ENCODE measurements at regions of chr1 and their contacts with region 1.

Region 1: DNA sequence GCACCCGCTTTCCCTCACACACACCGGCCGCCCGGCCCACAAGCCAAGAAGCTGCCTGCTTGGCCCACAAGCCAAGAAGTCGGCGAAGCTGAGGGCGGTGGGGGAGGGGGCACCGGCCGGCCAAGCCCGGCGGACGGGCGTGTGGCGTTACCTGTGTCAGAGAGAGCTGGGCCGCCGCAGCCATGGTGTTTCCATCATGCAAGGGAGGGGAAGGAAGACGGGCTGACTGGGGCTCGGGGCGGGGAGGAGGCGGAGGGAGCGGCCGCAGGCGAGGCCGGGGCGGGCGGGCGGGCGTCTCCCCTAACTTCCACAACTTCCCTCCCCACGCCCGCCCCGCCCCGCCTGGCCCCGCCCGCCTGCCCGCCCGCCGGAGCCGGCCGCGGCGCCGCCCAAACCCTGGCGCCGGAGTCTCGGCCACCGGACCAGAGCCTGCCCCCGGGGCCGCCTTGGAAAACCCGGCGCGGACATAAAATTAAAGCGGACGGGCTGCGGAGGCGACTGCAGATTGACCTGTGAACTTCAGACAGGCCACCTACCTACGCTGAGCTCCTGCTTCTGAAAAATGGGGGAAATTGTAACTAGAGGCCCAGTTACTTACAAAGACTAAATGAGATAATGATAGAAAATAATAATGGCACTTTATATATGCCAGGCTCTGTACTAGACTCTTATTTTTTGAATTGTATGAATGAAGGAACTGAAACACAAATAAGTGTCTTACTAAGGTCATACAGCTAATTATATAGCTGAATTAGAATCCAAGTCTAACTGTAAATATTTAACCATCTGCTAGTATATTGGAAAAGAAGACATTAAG is at the start of gene EPS15:
- DNase-seq: peak; percentile 95
- ATAC-seq: peak; percentile 76
- H3K4me3 Mint-ChIP-seq: peak within 1 kb of the TSS; percentile 100
- H3K27ac Mint-ChIP-seq: peak within 1 kb of the TSS; percentile 93
- H3K4me1 Mint-ChIP-seq: peaks cover 48% of the 10 kb centered on the region
- H3K27me3 Mint-ChIP-seq: no peaks in the 10 kb centered on the region
- total RNA-seq, gene EPS15: 59.6 to 61.6 TPM

Region 2: DNA sequence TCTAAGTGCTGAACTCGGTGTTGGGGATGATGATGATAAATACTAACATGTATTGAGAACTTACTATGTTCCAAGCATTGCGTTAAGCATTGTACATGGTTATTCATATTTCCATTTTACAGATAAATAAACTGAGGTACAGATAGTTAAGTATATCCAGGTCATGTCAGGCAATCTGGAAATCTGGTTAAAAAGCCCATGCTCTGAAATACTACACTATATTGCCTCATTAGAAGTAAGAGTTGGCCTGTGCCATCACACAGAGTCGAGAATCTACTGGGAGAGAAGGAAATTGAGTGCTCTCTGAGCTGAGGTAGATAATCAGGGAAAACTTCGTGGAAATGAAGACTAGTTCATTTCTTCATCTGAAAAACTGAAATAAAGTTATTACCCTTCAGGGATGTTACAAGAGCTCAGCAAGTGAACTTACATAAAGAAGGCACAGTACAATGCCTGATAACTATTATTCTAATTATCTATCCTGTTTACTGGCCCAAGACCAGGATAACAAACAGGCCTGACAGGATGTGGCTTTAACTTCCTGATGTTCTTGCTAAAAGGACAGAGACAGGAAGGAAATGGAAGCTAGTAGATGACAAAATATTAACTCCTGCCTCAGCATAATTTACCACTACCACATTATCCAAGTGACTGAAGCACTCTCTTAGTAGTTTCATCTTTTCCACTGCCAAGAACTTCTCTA is 85.8 kb before region 1 on chr1:
- CTCF ChIA-PET with region 1: no interaction called
- POLR2A ChIA-PET with region 1: interaction called, 7 read pairs
- intact Hi-C with region 1: loop called in 1 of 2 experiments (anchors 5 kb)
- DNase-seq: no peak
- ATAC-seq: no peak
- H3K4me3 Mint-ChIP-seq: no peak overlapping the region
- H3K27ac Mint-ChIP-seq: peak overlapping the region; percentile 45
- H3K4me1 Mint-ChIP-seq: peaks cover 24% of the 10 kb centered on the region
- H3K27me3 Mint-ChIP-seq: no peaks in the 10 kb centered on the region

Region 3: DNA sequence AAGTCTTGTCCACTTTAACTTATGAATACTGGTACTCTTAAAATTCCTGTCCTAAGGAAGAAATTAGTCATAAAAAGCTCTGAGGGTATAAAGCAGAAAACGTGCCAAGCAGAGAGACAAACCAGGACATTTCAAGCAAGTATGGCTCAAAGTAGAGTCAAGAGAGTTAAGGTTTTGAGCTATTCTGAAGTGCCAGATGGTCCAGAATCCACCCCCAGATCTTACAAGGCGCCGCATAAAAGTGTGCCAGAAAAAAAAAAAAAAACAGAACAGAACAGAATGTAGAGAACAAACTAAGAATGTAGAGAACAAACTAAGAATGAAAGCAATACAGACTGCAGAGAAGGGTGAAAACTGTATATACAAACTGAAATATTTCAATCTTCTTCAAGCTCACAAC is 12.7 kb before region 1 on chr1:
- CTCF ChIA-PET with region 1: interaction called, 4 read pairs
- POLR2A ChIA-PET with region 1: interaction called, 4 read pairs
- intact Hi-C with region 1: loop called (anchors 1 to 2 kb)
- DNase-seq: peak; percentile 32
- ATAC-seq: peak; percentile 55
- H3K4me3 Mint-ChIP-seq: no peak overlapping the region
- H3K27ac Mint-ChIP-seq: no peak overlapping the region
- H3K4me1 Mint-ChIP-seq: peaks cover 53% of the 10 kb centered on the region
- H3K27me3 Mint-ChIP-seq: no peaks in the 10 kb centered on the region

Region 4: DNA sequence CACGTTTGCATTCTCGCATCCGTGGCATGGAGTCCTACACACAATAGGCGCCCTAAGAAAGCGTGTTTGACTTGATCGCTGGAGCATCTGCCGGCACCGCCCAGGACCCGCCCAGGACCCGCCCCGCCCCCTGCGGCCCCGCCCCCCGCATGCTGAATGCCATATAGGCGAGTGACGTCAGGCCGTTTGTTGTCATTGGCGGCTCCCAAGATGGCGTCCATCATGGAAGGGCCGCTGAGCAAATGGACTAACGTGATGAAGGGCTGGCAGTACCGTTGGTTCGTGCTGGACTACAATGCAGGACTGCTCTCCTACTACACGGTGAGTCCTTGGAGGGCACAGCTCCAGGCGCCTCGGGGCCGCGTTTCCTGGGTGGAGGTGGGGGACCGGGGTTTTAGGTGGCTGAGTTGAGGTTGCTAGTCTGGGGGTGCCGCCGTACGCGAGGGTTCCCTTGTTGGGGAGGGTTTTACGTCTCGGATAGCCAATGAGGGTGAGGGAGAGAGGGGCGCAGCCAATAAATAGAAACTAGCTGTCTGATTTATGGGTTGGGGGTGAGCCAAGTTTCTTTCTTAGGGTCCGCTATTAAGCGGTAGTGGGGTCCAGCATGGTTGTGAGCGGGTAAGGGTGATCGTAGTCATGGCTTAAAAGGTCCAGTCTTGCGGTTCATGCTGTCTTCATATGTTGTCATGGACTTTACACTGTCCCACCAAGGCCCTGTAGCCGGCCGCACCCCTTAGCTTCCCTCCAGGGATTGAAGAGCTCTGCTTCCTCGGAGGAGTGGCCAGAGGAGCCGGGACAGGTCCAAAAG is 97.8 kb after region 1 on chr1 and contains the start of gene OSBPL9:
- CTCF ChIA-PET with region 1: no interaction called
- POLR2A ChIA-PET with region 1: no interaction called
- intact Hi-C with region 1: loop called (anchors 1 to 5 kb)
- DNase-seq: peak; percentile 95
- ATAC-seq: peak; percentile 95
- H3K4me3 Mint-ChIP-seq: peak within 1 kb of the TSS; percentile 100
- H3K27ac Mint-ChIP-seq: peak within 1 kb of the TSS; percentile 96
- H3K4me1 Mint-ChIP-seq: peaks cover 33% of the 10 kb centered on the region
- H3K27me3 Mint-ChIP-seq: no peaks in the 10 kb centered on the region
- total RNA-seq, gene OSBPL9: 46.2 to 64.5 TPM

Region 5: GRCh38 chr1:52141513-52142219 is 622.4 kb after region 1 on chr1 and contains the start of gene ZFYVE9:
- CTCF ChIA-PET with region 1: no interaction called
- POLR2A ChIA-PET with region 1: no interaction called
- intact Hi-C with region 1: loop called in 1 of 2 experiments (anchors 5 kb)
- DNase-seq: peak; percentile 83
- ATAC-seq: peak; percentile 62
- H3K4me3 Mint-ChIP-seq: peak within 1 kb of the TSS; percentile 80
- H3K27ac Mint-ChIP-seq: peak within 1 kb of the TSS; percentile 84
- H3K4me1 Mint-ChIP-seq: peaks cover 43% of the 10 kb centered on the region
- H3K27me3 Mint-ChIP-seq: peaks cover 9% of the 10 kb centered on the region
- total RNA-seq, gene ZFYVE9: 4.3 to 4.7 TPM

Measured in activated CD4-positive, alpha-beta T cell treated with anti-CD3 and anti-CD28 coated beads for 36 hours (primary cell).